ENCODE measurements at regions of chr10 and their contacts with region 1.

Region 1: DNA sequence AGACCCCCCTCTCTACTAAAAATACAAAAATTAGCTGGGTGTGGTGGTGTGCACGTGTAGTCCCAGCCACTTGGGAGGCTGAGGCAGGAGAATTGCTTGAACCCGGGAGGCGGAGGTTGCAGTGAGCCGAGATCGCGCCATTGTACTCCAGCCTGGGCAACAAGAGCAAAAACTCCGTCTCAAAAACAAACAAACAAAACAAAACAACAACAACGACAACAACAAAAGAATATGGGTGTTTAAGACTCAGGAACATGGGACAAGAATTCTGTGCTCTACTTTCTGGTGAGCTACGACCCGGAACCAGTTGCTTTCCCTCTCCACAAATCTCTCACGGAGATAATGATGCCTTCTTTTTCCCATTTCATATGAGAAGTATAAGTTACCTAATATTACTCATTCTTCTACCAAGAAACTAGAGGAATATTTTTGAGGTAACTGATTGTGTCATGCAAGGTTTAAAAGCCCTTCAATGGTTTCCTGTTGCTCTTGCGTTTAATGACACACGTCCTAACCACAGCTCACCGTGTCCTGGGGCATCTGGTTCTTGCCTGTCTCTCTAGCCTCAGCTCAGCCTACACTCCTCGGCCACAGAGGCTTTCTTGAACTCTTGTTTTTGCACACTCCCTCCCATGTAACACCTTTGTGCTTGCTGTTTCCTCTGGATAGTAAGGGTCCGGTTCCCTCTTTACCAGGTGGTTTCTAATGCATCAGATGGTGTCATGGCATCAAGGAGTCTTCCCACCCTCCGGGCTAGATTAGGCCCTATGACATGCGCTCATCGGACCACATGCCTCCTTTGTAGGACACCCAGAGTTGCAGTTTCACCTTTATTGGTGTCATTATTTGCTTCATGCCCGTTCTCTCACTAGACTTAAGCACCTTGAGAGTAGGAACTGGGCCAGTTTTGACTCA is 67.5 kb downstream of the PFKFB3 start:
- DNase-seq: peak; percentile 92
- H3K4me3 Mint-ChIP-seq: peak overlapping the region; percentile 62
- H3K27ac Mint-ChIP-seq: peak overlapping the region; percentile 94
- H3K4me1 Mint-ChIP-seq: peaks cover 62% of the 10 kb centered on the region
- H3K27me3 Mint-ChIP-seq: no peaks in the 10 kb centered on the region

Region 2: GRCh38 chr10:6163364-6164270 is 106.6 kb before region 1 on chr10:
- intact Hi-C with region 1: loop called (anchors 1 kb)
- DNase-seq: peak; percentile 98
- H3K4me3 Mint-ChIP-seq: peak overlapping the region; percentile 98
- H3K27ac Mint-ChIP-seq: peak overlapping the region; percentile 98
- H3K4me1 Mint-ChIP-seq: peaks cover 49% of the 10 kb centered on the region
- H3K27me3 Mint-ChIP-seq: no peaks in the 10 kb centered on the region

Region 3: GRCh38 chr10:6300106-6300783 is 30.0 kb after region 1 on chr10:
- intact Hi-C with region 1: loop called (anchors 1 kb)
- DNase-seq: peak; percentile 78
- H3K4me3 Mint-ChIP-seq: peak overlapping the region; percentile 73
- H3K27ac Mint-ChIP-seq: peak overlapping the region; percentile 94
- H3K4me1 Mint-ChIP-seq: peaks cover 47% of the 10 kb centered on the region
- H3K27me3 Mint-ChIP-seq: no peaks in the 10 kb centered on the region

Region 4: DNA sequence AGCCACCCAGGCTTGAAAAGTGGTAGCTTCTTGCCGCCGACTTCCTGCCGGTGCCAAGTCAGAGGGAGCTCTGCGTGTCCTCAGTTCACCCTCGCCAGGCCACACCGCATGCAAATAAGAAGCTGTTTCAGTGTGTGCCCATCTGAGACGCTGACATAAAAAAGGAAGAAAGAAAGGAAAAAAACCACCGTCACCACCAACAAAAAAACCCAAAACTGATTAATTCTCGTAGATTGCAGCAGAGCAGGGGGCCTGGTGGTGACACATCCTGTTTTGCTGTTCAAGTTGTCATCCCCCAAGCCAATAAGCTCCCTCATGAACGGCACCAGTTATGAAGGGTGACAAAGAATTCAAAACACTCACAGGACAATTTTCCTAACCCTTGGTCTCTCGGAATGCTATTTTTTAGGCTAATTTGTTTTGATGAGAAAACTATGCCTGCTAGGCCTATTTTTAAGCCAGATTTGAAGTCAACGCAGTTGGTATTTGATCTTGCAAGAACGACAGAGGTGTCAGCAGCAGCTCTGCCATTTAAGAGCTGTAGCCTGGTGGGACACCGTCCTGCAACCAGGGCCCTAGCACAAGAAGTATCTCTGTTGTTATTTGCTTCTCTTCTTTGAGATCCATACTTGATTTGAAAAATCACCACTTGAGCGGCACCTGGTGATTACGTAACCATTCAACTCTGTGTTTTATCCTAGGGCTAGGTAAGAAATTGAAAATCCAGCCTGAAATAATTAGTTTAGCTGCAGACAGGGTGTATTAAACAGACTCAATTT is 78.1 kb after region 1 on chr10:
- intact Hi-C with region 1: loop called (anchors 1 kb)
- DNase-seq: peak; percentile 91
- H3K4me3 Mint-ChIP-seq: peak overlapping the region; percentile 78
- H3K27ac Mint-ChIP-seq: peak overlapping the region; percentile 92
- H3K4me1 Mint-ChIP-seq: peaks cover 46% of the 10 kb centered on the region
- H3K27me3 Mint-ChIP-seq: no peaks in the 10 kb centered on the region

Measured in activated CD4-positive, alpha-beta T cell treated with anti-CD3 and anti-CD28 coated beads, Interleukin-2, amount 10 ng/mL, durations not matched to agents 24 days and 14 days (primary cell).